ENCODE measurements at regions of chr14 and their contacts with region 1.

Region 1: DNA sequence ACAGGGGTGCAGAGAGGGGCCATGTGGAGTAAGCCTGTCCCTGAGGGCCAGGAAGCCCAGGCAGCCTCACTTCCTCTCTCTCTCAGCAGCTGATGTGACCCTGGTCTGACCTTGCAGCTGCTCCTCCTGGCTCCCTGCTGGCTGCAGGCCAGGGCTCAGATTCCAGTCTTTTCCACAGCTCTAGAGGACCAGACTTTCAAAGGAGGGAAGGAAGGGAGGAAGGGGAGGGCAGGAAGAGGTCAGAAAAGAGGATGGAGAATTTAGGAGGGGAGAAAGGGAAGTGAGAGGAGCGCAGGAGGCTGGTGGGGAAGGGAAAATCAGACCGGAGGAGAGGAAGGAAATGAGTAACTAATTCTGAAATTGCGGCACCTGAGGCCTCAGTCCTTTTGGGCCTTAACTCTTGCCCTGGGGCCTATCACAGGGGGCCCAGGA is 40.9 kb upstream of the VASH1 start:
- DNase-seq: no peak
- ATAC-seq: no peak
- H3K4me3 ChIP-seq: no peak overlapping the region
- H3K4me3 Mint-ChIP-seq: no peak overlapping the region
- H3K27ac ChIP-seq: no peak overlapping the region
- H3K27ac Mint-ChIP-seq: peak overlapping the region in 1 of 2 donors; percentile 73
- H3K4me1 ChIP-seq: no peaks in the 10 kb centered on the region
- H3K4me1 Mint-ChIP-seq: peaks cover 0 to 7% (median 7%) of the 10 kb centered on the region in 3 donors
- H3K27me3 ChIP-seq: peaks cover 0 to 17% of the 10 kb centered on the region in 2 experiments
- H3K27me3 Mint-ChIP-seq: peaks cover 16 to 20% of the 10 kb centered on the region in 2 donors

Region 2: GRCh38 chr14:75675265-75675960 is 1045.0 kb before region 1 on chr14:
- CTCF ChIA-PET with region 1: no interaction called
- POLR2A ChIA-PET with region 1: no interaction called
- DNase-seq: no peak
- ATAC-seq: no peak
- H3K4me3 ChIP-seq: no peak overlapping the region
- H3K4me3 Mint-ChIP-seq: no peak overlapping the region
- H3K27ac ChIP-seq: no peak overlapping the region
- H3K27ac Mint-ChIP-seq: no peak overlapping the region
- H3K4me1 ChIP-seq: no peaks in the 10 kb centered on the region
- H3K4me1 Mint-ChIP-seq: peaks cover 0 to 1% (median 0%) of the 10 kb centered on the region in 3 donors
- H3K27me3 ChIP-seq: no peaks in the 10 kb centered on the region
- H3K27me3 Mint-ChIP-seq: no peaks in the 10 kb centered on the region

Region 3: GRCh38 chr14:76742966-76743365 is 22.6 kb after region 1 on chr14:
- CTCF ChIA-PET with region 1: no interaction called
- POLR2A ChIA-PET with region 1: no interaction called
- DNase-seq: no peak
- ATAC-seq: no peak
- H3K4me3 ChIP-seq: no peak overlapping the region
- H3K4me3 Mint-ChIP-seq: no peak overlapping the region
- H3K27ac ChIP-seq: no peak overlapping the region
- H3K27ac Mint-ChIP-seq: no peak overlapping the region
- H3K4me1 ChIP-seq: no peaks in the 10 kb centered on the region
- H3K4me1 Mint-ChIP-seq: peaks cover 0 to 3% (median 0%) of the 10 kb centered on the region in 3 donors
- H3K27me3 ChIP-seq: peaks cover 0 to 16% of the 10 kb centered on the region in 2 experiments
- H3K27me3 Mint-ChIP-seq: peaks cover 22 to 27% of the 10 kb centered on the region in 2 donors

Region 4: GRCh38 chr14:76784266-76785264 is 64.2 kb after region 1 on chr14:
- CTCF ChIA-PET with region 1: interaction called, 4 to 5 read pairs
- POLR2A ChIA-PET with region 1: interaction called in 1 of 2 experiments, 15 read pairs
- DNase-seq: peak; percentile 20 to 70 (median 45)
- ATAC-seq: peak; percentile 76 to 98 (median 84)
- H3K4me3 ChIP-seq: no peak overlapping the region
- H3K4me3 Mint-ChIP-seq: no peak overlapping the region
- H3K27ac ChIP-seq: no peak overlapping the region
- H3K27ac Mint-ChIP-seq: peak overlapping the region; percentile 23 to 24
- H3K4me1 ChIP-seq: peaks cover 0 to 4% of the 10 kb centered on the region in 2 experiments
- H3K4me1 Mint-ChIP-seq: peaks cover 17 to 29% (median 26%) of the 10 kb centered on the region in 3 donors
- H3K27me3 ChIP-seq: no peaks in the 10 kb centered on the region
- H3K27me3 Mint-ChIP-seq: no peaks in the 10 kb centered on the region

Measured in T-cell (primary cell).